ENCODE measurements at regions of chr6 and their contacts with region 1.

Region 1: DNA sequence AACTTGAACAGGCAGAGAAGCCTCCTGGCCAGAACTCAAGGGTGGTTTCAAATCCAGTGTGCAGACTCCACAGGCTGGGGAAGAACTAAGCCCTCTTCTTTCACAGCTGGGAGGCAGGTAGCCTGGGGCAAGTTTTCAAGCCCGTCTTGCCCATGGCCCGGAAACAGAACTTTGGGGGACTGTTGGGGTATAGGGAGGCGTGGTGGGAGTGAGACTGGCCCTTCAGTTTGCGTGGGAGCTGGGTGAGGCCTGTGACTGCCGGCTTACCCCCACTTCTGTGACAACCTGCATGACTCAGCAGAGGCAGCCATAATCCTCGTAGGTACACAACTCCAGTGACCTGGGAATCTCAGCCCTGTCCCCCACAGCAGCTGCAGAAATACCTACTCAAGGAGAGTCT is 1125.7 kb downstream of the HACE1 start:
- DNase-seq: no peak
- ATAC-seq: no peak
- H3K4me3 ChIP-seq: no peak overlapping the region
- H3K4me3 Mint-ChIP-seq: no peak overlapping the region
- H3K27ac ChIP-seq: no peak overlapping the region
- H3K27ac Mint-ChIP-seq: no peak overlapping the region
- H3K4me1 ChIP-seq: no peaks in the 10 kb centered on the region
- H3K4me1 Mint-ChIP-seq: no peaks in the 10 kb centered on the region
- H3K27me3 ChIP-seq: no peaks in the 10 kb centered on the region
- H3K27me3 Mint-ChIP-seq: no peaks in the 10 kb centered on the region
- CTCF ChIP-seq: no peak

Region 2: GRCh38 chr6:101776919-101777350 is 1957.1 kb before region 1 on chr6:
- CTCF ChIA-PET with region 1: no interaction called
- POLR2A ChIA-PET with region 1: no interaction called
- intact Hi-C with region 1: no loop called
- DNase-seq: no peak
- ATAC-seq: no peak
- H3K4me3 ChIP-seq: no peak overlapping the region
- H3K4me3 Mint-ChIP-seq: no peak overlapping the region
- H3K27ac ChIP-seq: no peak overlapping the region
- H3K27ac Mint-ChIP-seq: no peak overlapping the region
- H3K4me1 ChIP-seq: no peaks in the 10 kb centered on the region
- H3K4me1 Mint-ChIP-seq: no peaks in the 10 kb centered on the region
- H3K27me3 ChIP-seq: no peaks in the 10 kb centered on the region
- H3K27me3 Mint-ChIP-seq: no peaks in the 10 kb centered on the region
- CTCF ChIP-seq: no peak

Region 3: GRCh38 chr6:103570431-103570830 is 163.6 kb before region 1 on chr6:
- CTCF ChIA-PET with region 1: no interaction called
- POLR2A ChIA-PET with region 1: no interaction called
- intact Hi-C with region 1: no loop called
- DNase-seq: no peak
- ATAC-seq: no peak
- H3K4me3 ChIP-seq: no peak overlapping the region
- H3K4me3 Mint-ChIP-seq: no peak overlapping the region
- H3K27ac ChIP-seq: no peak overlapping the region
- H3K27ac Mint-ChIP-seq: no peak overlapping the region
- H3K4me1 ChIP-seq: no peaks in the 10 kb centered on the region
- H3K4me1 Mint-ChIP-seq: no peaks in the 10 kb centered on the region
- H3K27me3 ChIP-seq: no peaks in the 10 kb centered on the region
- H3K27me3 Mint-ChIP-seq: no peaks in the 10 kb centered on the region
- CTCF ChIP-seq: no peak

Region 4: GRCh38 chr6:103769431-103769830 is 35.4 kb after region 1 on chr6:
- CTCF ChIA-PET with region 1: no interaction called
- POLR2A ChIA-PET with region 1: no interaction called
- intact Hi-C with region 1: loop called in 1 of 2 experiments (anchors 2 kb)
- DNase-seq: no peak
- ATAC-seq: no peak
- H3K4me3 ChIP-seq: no peak overlapping the region
- H3K4me3 Mint-ChIP-seq: no peak overlapping the region
- H3K27ac ChIP-seq: no peak overlapping the region
- H3K27ac Mint-ChIP-seq: no peak overlapping the region
- H3K4me1 ChIP-seq: no peaks in the 10 kb centered on the region
- H3K4me1 Mint-ChIP-seq: no peaks in the 10 kb centered on the region
- H3K27me3 ChIP-seq: no peaks in the 10 kb centered on the region
- H3K27me3 Mint-ChIP-seq: no peaks in the 10 kb centered on the region
- CTCF ChIP-seq: no peak

Measured in CD8-positive, alpha-beta T cell (primary cell).